OCI-LY7 (cell line): ENCODE measurements at regions of chrX and their contacts with region 1.

Region 1: DNA sequence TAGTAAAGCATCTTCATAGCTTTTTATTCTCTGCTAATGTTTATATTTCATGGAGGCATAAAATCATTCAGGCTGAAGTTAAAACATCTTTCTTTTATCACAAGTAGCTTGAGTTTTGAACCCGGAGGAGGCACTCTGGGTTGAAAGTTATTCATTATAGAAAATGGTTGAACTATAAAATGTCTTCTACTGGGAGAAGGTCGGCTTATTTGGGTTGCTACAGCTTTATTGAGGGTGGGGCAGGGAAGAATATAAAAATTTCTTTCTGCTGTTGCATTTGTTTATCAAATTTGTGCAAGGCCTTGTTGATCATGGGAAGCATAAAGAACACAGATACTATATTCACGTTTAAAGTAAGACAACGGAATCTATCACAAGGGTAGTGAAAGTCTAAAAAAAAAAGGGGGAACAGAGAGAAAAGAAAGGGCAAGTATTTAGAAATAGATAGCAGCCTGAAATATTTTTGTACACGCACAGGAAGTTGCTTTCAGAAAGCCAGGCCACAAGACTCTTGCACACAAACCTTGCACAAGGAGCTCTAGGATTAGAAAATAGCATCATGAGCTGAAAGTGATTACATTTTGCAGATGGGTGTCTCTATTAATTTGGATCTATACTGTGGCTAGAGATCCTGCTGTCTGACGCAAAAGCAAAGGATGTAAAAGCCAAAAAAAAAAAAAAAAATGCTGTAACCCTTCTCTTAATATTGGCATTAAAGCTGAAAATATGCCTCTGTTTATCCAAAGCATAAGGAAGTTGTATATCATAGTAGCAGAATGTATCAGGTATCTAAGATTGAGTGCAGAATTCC is 37.2 kb upstream of the FAM9C start:
- DNase-seq: peak; percentile 70
- H3K4me3 ChIP-seq: peak overlapping the region; percentile 39
- H3K27ac ChIP-seq: peak overlapping the region; percentile 93
- H3K4me1 ChIP-seq: peaks cover 100% of the 10 kb centered on the region
- CTCF ChIP-seq: no peak

Region 2: DNA sequence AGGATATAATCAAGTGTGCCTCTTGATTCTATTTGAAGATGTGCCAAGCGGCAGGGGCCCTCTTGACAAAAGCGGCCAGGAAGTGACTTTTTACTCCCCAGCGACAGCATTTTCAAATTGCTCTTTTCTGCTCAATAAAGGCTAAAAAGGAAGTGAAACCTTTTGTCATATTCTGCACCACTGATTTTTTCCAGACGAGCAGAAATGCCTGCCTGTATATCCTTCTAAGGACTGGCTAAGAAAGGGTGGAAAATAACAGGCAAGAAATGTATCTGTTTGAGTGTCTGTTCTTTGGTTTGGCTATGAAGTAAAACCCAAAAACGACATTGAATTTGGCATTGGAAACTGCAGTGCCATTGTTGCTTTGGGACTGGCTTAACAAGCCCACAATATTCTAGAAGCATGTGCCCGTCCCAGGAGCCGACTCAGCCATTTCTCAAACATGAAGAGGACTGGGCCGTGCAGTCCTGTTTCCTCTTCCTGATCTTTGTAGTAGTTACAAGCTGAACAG is 81.2 kb before region 1 on chrX:
- CTCF ChIA-PET with region 1: interaction called, 3 read pairs
- POLR2A ChIA-PET with region 1: interaction called, 7 read pairs
- intact Hi-C with region 1: loop called (anchors 2 kb)
- DNase-seq: peak; percentile 80
- H3K4me3 ChIP-seq: peak overlapping the region; percentile 62
- H3K27ac ChIP-seq: peak overlapping the region; percentile 83
- H3K4me1 ChIP-seq: peaks cover 64% of the 10 kb centered on the region
- CTCF ChIP-seq: no peak